AG04449 (cell line): ENCODE measurements at regions of chr7 and their contacts with region 1.

Region 1: GRCh38 chr7:16982640-16983350 is 101.0 kb upstream of the AGR3 start:
- DNase-seq: no peak
- H3K4me3 ChIP-seq: no peak overlapping the region
- CTCF ChIP-seq: peak; percentile 69

Region 2: DNA sequence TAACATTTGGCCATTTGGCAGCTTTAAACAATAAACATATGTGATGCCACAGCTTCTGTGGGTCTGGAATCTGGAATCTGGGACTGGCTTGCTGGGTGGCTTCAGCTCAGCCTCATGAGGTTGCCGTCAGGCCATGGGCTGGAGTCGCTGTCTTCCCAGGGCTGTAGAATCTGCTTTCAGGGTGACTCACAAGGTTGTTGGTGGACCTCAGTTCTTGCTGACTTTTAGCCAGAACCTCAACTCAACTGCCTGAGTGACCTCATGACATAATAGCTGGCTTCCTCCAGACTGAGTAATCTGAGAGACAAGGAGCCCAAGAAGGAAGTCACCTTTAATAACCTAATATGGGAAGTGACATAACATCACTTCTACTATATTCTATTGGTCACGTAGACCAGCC is 273.8 kb before region 1 on chr7:
- CTCF ChIA-PET with region 1: no interaction called
- POLR2A ChIA-PET with region 1: no interaction called
- DNase-seq: peak; percentile 98
- H3K4me3 ChIP-seq: no peak overlapping the region
- CTCF ChIP-seq: no peak

Region 3: GRCh38 chr7:16998481-16999051 is 15.8 kb after region 1 on chr7:
- CTCF ChIA-PET with region 1: interaction called, 12 read pairs
- POLR2A ChIA-PET with region 1: no interaction called
- DNase-seq: no peak
- H3K4me3 ChIP-seq: no peak overlapping the region
- CTCF ChIP-seq: no peak

Region 4: DNA sequence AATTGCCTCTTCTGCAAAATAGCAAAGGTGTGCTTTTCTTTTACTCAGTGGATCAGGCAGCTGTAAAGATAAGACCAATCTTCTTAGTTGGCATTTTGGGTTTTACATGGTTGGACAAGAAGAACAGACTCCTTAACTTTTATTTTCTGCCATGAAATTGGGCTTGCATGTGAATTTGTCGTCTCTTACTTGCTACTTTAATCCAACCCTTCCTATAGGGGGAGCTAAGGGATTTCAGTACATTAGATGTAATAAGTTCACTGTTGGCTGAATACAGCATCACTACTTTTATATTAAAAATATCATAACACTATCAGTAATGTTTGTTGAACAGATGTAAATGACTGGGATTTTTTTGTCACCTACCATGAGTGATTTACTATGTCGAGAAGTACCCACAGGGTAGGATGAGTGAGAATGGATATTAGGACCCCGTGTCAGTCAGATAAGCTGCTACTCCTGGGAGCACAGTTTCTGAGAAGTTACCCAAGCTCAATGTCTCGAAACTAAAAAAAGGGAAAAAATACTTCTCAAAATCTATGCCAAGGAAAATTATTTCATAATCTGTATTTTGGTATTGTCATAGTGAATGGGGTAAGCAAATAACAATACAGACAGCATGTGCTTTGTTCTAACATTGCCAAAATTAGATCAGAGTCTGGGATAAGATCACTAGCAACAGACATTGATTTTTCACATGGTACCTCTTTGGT is 26.4 kb after region 1 on chr7:
- CTCF ChIA-PET with region 1: interaction called, 27 read pairs
- POLR2A ChIA-PET with region 1: no interaction called
- DNase-seq: no peak
- H3K4me3 ChIP-seq: no peak overlapping the region
- CTCF ChIP-seq: no peak

Region 5: GRCh38 chr7:17646253-17646956 is 663.6 kb after region 1 on chr7:
- CTCF ChIA-PET with region 1: interaction called, 22 read pairs
- POLR2A ChIA-PET with region 1: no interaction called
- DNase-seq: no peak
- H3K4me3 ChIP-seq: no peak overlapping the region
- CTCF ChIP-seq: peak; percentile 18